ENCODE measurements at regions of chr1 and their contacts with region 1.

Region 1: GRCh38 chr1:58783993-58784757 is at the start of gene JUN:
- DNase-seq: peak; percentile 99
- H3K4me3 Mint-ChIP-seq: peak within 1 kb of the TSS; percentile 89
- H3K27ac Mint-ChIP-seq: peak within 1 kb of the TSS; percentile 96
- H3K4me1 Mint-ChIP-seq: peaks cover 21% of the 10 kb centered on the region
- H3K27me3 Mint-ChIP-seq: peaks cover 15% of the 10 kb centered on the region
- total RNA-seq, gene JUN: 31.1 to 32.3 TPM

Region 2: GRCh38 chr1:58773406-58773840 is 10.8 kb before region 1 on chr1:
- CTCF ChIA-PET with region 1: no interaction called
- POLR2A ChIA-PET with region 1: interaction called, 14 read pairs
- DNase-seq: no peak
- H3K4me3 Mint-ChIP-seq: no peak overlapping the region
- H3K27ac Mint-ChIP-seq: no peak overlapping the region
- H3K4me1 Mint-ChIP-seq: peaks cover 9% of the 10 kb centered on the region
- H3K27me3 Mint-ChIP-seq: peaks cover 1% of the 10 kb centered on the region

Region 3: GRCh38 chr1:58903514-58904298 is 119.5 kb after region 1 on chr1:
- CTCF ChIA-PET with region 1: interaction called, 4 read pairs
- POLR2A ChIA-PET with region 1: interaction called, 21 read pairs
- DNase-seq: peak; percentile 84
- H3K4me3 Mint-ChIP-seq: peak overlapping the region; percentile 73
- H3K27ac Mint-ChIP-seq: peak overlapping the region; percentile 72
- H3K4me1 Mint-ChIP-seq: peaks cover 17% of the 10 kb centered on the region
- H3K27me3 Mint-ChIP-seq: no peaks in the 10 kb centered on the region

Region 4: DNA sequence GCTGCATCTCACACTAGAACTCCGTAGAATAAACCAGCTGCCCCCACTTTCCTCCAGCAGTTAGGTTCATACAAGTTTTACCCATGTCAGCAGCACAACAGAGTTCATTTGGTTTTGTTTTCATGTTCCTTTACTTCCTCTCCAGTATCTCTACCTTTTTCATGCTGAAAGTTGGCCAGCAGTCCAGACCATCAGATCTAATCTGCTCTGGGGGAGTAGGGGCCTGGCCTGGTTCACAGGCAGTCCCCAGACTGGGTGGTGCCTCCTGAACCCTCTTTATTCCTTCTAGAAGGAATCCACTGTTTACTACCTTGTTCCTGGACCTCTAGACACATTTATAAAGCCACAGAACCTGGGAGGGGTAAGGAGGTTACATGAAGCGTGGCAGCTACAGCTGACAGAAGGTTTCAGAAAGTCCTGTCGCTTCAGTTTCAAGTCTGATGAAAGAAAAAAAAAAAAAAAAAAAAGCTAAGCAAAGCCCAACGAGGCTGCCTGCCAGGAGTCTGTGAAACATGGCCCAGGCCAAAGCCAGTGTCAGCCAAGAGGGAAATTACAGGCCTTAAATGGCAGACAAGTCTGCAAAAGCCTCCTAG is 184.3 kb after region 1 on chr1:
- CTCF ChIA-PET with region 1: interaction called, 3 read pairs
- POLR2A ChIA-PET with region 1: interaction called, 13 read pairs
- DNase-seq: peak; percentile 44
- H3K4me3 Mint-ChIP-seq: peak overlapping the region; percentile 38
- H3K27ac Mint-ChIP-seq: peak overlapping the region; percentile 97
- H3K4me1 Mint-ChIP-seq: peaks cover 34% of the 10 kb centered on the region
- H3K27me3 Mint-ChIP-seq: no peaks in the 10 kb centered on the region

Region 5: DNA sequence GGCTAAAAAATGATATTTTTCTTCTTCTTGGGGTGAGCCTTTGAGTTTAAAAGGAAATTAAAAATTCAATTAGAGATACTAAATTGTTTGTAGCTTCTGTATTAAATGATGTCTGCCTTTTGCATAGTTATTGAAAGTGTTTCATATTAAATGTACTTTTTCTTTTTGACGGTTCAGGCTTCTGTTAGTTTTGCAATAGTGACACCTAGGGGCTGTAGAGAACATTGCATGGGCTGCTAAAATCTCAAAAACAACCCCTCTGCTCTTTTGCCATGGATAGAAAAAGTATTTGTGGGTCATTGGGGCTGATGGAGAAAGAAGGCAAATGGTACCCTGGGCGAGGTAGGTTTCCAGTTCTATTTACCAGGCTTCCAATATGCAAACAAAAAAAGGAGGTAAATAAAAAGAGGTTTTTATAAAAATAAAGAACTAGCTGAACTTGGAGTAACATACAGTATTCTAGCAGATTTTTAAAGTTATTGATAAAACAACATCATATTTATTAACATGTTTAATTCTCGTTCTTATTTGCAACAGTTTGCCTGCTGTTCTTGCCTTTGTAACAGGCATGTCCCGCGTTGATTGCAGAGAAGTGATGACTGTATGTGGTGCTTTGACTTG is 915.2 kb after region 1 on chr1:
- CTCF ChIA-PET with region 1: interaction called, 19 read pairs
- POLR2A ChIA-PET with region 1: interaction called, 9 read pairs
- DNase-seq: no peak
- H3K4me3 Mint-ChIP-seq: no peak overlapping the region
- H3K27ac Mint-ChIP-seq: no peak overlapping the region
- H3K4me1 Mint-ChIP-seq: peaks cover 26% of the 10 kb centered on the region
- H3K27me3 Mint-ChIP-seq: no peaks in the 10 kb centered on the region

Measured in activated CD4-positive, alpha-beta memory T cell treated with anti-CD3 and anti-CD28 coated beads, Interleukin-2, amount 10 ng/mL, durations not matched to agents 7 days and 5 days (primary cell).